Heart right ventricle (tissue), 16 donors: ENCODE measurements at regions of chr16 and their contacts with region 1.

Region 1: DNA sequence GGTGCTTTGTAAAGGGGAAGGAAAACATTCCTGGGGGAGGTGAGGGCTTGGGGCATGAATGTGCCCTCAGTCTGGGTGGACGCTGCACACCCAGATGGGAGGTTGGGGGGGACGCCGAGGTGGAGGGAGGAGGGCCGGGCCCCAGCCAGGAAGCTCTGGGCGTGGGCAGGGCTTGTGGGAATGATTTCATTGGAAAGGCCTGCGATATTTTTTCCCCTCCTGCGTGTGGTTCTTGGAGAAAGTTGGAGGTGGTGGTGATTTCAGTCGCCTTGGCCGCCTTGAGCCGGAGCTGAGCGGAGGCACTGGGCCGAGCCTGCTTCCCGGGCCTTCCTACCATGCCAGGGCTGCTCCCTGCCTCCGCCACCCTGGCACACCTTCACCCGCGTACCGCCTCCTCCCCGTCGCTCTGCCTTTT is 26.4 kb upstream of the CLEC18A start:
- DNase-seq: peak; percentile 69 to 80
- ATAC-seq: peak; percentile 74 to 89 (median 83)
- H3K4me3 ChIP-seq: peak overlapping the region in 9 of 10 donors; percentile 19 to 59 (median 48)
- H3K27ac ChIP-seq: peak overlapping the region; percentile 75 to 95 (median 88)
- H3K4me1 ChIP-seq: peaks cover 10 to 76% (median 42%) of the 10 kb centered on the region in 9 donors
- H3K27me3 ChIP-seq: no peaks in the 10 kb centered on the region
- CTCF ChIP-seq: no peak

Region 2: DNA sequence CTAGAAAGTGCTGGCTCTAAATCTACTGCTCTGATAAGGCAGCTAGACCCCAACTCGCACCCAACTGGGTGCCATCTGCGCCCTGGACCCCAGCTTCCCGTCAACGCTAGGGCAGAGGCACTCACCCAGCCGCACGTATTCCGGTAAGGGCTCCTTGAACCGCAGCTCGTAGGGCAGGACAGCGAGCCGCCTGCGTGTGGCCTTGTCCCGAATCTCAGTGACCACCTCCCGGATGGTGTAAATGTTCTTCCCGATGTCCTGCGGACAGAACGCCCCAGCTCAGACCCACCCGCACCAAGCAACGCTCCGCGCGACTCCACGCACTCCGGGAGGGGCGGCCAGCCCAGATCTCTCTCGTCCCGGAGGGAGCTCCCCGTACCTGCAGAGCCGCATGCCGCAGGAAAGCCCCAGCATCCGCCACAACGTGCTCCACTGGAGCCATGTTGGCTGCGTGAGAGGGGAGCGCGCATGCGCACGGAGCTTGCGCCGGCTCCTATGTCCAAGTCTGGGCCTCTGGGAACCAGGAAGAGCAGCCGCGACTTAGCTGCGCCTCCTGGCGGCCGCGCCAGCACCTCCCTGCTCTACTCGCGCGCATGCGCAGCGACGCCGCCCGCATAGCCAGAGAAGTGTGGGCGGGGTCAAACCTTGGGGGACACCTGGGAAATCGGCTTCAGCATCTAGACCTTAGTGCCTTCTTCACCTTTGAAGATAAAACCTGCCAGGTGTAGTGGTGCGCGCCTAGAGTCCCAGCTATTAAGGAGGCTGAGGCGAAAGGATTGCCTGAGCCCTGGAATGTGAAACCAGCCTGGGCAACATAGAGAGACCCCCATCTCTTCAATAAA is 170.1 kb before region 1 on chr16 and contains the start of gene NOB1:
- intact Hi-C with region 1: no loop called
- DNase-seq: peak; percentile 93 to 98
- ATAC-seq: peak; percentile 98 to 99 (median 99)
- H3K4me3 ChIP-seq: peak within 1 kb of the TSS; percentile 63 to 93 (median 82)
- H3K27ac ChIP-seq: peak within 1 kb of the TSS in 9 of 10 donors; percentile 49 to 86 (median 75)
- H3K4me1 ChIP-seq: peaks cover 0 to 26% (median 18%) of the 10 kb centered on the region in 9 donors
- H3K27me3 ChIP-seq: no peaks in the 10 kb centered on the region
- CTCF ChIP-seq: peak; percentile 97 to 100 (median 98)
- total RNA-seq, gene NOB1: 11.2 to 23.4 (median 15.6) TPM

Region 3: GRCh38 chr16:69861292-69862030 is 63.3 kb before region 1 on chr16:
- intact Hi-C with region 1: loop called in 3 of 10 experiments (anchors 2 to 10 kb)
- DNase-seq: peak in 1 of 2 donors; percentile 90
- ATAC-seq: peak; percentile 80 to 92 (median 89)
- H3K4me3 ChIP-seq: peak overlapping the region in 5 of 10 donors; percentile 9 to 28 (median 23)
- H3K27ac ChIP-seq: peak overlapping the region; percentile 72 to 95 (median 89)
- H3K4me1 ChIP-seq: peaks cover 17 to 60% (median 38%) of the 10 kb centered on the region in 9 donors
- H3K27me3 ChIP-seq: no peaks in the 10 kb centered on the region
- CTCF ChIP-seq: no peak

Region 4: DNA sequence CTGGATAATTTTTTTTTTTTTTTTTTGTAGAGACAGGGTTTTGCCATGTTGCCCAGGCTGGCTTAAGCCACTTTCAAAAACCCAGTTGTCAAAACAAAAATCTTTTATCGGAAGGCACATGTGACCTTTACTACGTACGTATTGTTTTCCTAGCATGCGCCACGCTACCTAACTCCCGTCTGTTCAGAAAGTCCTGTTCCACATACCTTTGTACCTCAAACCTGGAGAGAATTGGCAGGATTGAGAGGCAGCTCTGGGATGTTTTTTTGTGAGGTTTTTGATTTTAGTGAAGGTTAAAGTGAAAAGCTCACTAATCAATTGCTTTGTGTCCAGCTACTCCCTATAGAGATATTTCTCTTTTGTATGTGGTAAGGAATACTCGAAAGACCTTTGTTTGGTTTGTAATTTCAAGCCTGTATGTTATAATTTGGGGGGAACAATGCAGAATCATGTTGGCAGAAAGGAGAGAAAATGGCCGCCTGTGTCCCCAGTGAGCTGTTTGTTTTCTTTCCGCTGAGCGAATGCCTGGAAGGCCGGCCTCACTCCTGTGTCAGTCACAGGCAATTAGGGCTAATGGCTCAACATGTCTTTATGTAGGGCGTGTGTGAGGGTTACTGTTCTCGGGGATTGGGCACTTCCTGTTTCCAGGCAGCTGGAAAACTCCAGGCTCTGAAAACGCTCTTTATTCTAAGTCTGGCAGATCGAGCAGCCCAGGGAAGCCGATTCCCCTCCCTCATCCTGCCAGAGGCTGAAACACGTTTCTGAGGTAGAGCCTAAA is 34.5 kb before region 1 on chr16:
- intact Hi-C with region 1: loop called in 2 of 10 experiments (anchors 5 kb)
- DNase-seq: peak; percentile 47 to 71
- ATAC-seq: peak; percentile 60 to 94 (median 90)
- H3K4me3 ChIP-seq: peak overlapping the region in 1 of 10 donors; percentile 16
- H3K27ac ChIP-seq: peak overlapping the region; percentile 68 to 91 (median 81)
- H3K4me1 ChIP-seq: peaks cover 0 to 24% (median 15%) of the 10 kb centered on the region in 9 donors
- H3K27me3 ChIP-seq: no peaks in the 10 kb centered on the region
- CTCF ChIP-seq: no peak